Head of caudate nucleus (tissue), 42 donors: ENCODE measurements at regions of chr2 and their contacts with region 1.

Region 1: DNA sequence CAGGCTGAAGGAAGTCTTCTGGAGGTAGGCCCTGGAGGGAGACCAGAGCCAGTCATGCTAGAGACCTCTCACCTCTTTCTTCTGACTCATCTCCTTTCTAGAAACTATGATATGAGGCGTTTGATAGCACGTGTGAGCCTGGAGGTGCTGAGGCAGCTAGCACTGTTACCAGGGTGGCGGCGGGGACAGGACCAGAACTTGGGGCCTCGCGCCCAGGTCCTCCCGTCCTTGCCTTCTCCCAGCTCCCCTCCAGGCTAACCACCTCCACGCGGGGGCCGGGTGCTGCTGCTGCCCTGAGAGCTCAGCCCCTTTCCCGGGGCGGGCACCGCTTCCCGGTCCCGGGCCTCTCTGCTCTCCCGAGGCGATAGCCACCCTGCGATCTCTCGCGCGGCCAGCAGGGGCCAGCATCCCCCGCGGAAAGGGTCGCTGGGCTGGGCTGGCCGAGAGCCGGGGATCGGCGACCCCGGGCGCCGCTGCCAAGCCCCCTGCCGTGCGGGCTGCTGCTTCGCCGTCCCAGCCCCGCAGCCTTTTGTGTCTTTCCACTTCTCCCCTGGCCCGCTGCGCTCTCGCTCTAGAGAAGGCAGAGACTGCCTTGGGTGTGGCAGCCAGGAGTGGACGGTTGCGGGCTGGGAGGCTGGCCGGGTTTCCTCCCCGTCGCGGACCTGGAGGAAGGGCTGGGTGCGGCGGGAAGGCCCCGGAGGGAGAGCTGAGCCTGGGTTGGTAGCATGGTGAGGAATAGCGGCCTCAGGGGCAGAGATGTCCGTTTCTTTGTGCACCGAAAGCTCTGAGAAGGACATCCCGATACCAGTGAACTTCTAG is 49.1 kb downstream of the TMEM17 start:
- DNase-seq: peak; percentile 31 to 90 (median 79)

Region 2: DNA sequence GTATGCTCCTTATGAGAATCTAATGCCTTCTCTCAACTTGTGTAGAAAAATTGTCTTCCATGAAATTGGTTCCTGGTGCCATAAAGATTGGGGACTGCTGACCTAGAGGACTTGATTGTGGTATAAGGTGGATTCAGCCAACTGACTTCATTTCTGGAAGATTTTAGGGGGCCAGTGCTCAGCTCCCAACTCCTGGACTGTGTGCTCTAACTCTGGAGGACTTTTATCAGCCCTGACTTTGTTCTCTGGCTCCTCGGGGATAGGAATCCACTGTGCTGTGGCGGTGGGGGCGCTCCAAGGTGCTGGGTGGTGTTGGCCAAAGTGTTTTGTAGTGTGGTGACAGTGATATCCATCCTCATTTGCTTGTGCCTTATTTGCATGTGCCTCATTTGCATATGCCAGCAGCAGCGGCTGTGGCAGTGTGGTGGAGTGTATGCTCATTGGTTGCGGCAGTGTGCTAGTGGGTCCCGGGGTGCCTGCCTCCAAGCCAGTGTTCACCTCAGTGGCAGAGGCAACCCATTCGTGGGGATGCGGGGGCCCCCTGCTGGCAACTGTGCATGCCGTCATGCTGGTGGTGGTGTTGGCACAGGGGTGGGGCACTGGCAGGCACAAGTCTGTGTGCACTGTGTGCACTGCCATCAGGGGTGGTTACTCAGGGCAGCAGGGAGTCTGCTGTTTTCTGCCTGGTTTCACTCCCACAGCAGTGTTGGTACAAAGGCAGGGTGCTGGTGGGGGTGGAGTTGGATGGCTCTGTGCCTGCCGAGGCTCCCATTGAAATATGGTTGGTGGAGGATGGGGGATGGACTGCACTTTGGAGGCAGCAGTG is 268.2 kb after region 1 on chr2:
- intact Hi-C with region 1: loop called (anchors 5 kb)
- DNase-seq: peak; percentile 28 to 88 (median 71)

Region 3: DNA sequence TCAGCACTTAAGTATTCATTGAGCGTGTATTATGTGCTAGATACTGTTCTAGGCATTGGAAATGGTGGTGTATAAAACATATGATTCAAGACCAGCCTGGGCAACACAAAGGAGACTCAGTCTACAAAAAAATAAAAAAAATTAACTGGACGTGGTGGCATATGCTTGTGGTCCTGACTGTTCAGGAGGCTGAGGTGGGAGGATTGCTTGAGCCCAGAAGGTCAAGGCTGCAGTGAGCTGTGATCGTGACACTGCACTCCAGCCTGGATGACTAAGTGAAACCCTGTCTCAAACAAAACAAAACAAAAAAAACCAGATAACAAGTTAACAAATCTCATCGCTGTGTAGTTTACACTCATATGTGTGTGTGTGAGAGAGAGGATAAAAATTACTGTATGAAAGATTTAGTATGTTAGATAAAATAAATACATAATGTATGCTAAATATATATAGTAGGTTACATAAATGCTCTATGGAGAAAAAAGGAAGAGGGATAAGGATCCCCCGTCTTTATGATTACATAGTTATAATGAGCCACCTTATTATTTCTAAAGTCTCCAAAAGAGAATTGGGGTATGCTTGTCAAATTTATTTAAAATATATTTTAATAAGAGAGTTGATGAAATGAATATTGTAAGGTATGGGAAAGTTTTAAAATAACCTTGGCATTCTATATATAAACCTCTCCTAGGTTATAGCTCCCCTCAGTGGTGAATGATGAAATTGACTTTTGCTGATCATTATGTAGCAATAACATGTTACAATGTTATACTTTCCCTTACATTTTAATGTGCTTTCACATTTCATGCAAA is 317.8 kb after region 1 on chr2:
- intact Hi-C with region 1: loop called (anchors 2 kb)
- DNase-seq: peak in 6 of 42 donors; percentile 11 to 43 (median 23)